Activated T-helper 2 cell treated with anti-CD3 and anti-CD28 coated beads, Interferon-gamma antibody, Interleukin-2, Interleukin-4, amounts not matched to agents 10 μg/mL and 5 μg/mL and 100 μg/mL, durations not matched to agents 14 hours and 24 hours and 36 hours (primary cell): ENCODE measurements at regions of chr20 and their contacts with region 1.

Region 1: DNA sequence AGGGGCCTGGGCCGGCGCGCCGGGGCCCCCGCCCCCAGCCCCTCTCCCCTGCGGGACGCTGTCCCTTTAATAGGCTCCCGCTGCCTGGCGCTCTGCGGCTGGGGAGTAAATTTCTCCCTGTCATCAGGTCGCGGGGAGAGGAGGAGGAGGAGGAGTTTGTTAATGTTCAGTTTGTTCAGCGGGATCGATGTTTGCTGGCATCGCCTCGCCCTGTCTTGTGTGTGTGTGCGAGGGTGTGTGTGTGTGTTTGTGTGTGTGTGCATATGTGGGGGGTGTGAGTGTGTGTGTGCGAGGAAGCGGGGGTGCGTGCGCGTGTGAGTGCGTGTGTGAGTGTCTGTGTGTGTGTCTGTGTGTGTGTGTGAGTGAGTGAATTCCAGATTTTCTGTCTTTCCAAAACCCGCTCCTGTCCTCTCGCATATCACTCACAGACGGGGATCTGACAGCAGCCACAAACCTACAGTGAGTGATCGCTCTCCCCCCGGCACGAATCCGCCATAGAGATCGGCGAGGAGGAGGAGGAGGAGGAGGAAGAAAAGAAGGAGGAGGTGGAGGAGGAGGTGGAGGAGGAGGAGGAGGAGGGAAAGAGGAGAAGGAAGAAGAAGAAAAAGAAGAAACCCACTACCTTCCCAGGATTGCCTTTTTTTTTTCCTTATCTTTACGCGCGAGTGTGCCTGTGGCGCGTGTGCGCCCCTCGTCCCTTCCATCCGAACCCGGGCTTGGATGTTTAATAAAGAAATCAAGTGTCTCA is at the start of gene TSHZ2:
- DNase-seq: peak; percentile 20
- H3K4me3 Mint-ChIP-seq: peak within 1 kb of the TSS; percentile 93
- H3K27ac Mint-ChIP-seq: peak within 1 kb of the TSS; percentile 94
- H3K4me1 Mint-ChIP-seq: peaks cover 37% of the 10 kb centered on the region
- H3K27me3 Mint-ChIP-seq: peaks cover 17% of the 10 kb centered on the region
- total RNA-seq, gene TSHZ2: 19.8 and 23.0 TPM in 2 replicates

Region 2: GRCh38 chr20:52305858-52306257 is 666.5 kb before region 1 on chr20:
- intact Hi-C with region 1: loop called (anchors 2 kb)
- DNase-seq: peak; percentile 27
- H3K4me3 Mint-ChIP-seq: no peak overlapping the region
- H3K27ac Mint-ChIP-seq: peak overlapping the region; percentile 65
- H3K4me1 Mint-ChIP-seq: peaks cover 41% of the 10 kb centered on the region
- H3K27me3 Mint-ChIP-seq: no peaks in the 10 kb centered on the region

Region 3: DNA sequence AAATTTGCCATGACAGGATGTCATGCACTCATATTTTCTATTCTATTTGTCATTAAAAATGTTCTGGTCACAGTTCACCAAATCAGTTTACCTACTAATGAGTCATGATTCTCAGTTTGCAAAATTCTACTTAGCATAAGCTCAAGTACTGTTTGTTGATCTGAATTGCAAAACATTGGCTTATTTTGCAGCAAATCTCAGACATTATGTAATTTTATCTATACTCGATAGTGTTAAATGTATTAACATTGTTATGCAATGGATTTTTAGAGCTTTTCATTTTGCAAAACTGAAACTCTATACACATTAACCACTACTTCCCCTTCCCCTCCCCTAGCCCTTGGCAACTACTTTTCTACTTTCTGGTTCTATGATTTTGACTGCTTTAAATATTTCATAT is 566.9 kb before region 1 on chr20:
- intact Hi-C with region 1: loop called (anchors 10 kb)
- DNase-seq: no peak
- H3K4me3 Mint-ChIP-seq: no peak overlapping the region
- H3K27ac Mint-ChIP-seq: peak overlapping the region; percentile 17
- H3K4me1 Mint-ChIP-seq: peaks cover 41% of the 10 kb centered on the region
- H3K27me3 Mint-ChIP-seq: no peaks in the 10 kb centered on the region

Region 4: DNA sequence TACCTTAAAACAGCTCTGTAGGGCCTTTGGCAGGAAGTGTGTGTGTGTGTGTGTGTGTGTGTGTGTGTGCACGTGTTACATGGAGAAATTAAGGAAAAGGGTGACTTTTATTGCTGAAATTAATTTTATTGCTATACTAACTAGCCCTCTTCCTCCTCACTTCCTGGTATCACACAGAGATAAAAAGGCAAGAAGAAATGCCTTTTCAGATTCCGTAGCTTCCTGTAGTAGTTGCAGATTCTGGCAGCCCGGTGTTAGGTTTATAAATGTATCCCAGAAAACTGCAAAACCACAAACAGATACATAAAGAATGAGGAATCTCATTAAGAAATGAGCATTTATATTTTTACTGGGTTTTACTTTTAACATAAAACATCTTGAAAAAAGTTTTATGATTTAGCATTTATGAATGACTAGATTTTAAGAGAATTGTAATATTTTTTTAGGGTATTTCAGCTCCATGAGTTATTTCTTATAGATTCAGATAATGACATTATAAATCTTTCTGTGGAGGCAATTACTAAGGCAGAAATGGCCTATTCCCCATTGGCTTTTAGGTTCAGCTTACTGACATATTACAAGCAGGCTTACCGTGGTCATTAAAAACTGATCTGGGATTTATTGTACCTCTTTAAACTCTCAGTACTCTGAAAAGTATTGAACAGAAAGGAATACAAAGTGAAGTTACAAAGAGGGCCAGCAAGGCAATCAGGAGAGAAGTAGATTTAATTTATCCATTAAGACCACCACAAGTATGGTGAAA is 249.3 kb before region 1 on chr20:
- intact Hi-C with region 1: no loop called
- DNase-seq: no peak
- H3K4me3 Mint-ChIP-seq: no peak overlapping the region
- H3K27ac Mint-ChIP-seq: no peak overlapping the region
- H3K4me1 Mint-ChIP-seq: no peaks in the 10 kb centered on the region
- H3K27me3 Mint-ChIP-seq: peaks cover 1% of the 10 kb centered on the region

Region 5: GRCh38 chr20:53001498-53002301 is 29.3 kb after region 1 on chr20:
- intact Hi-C with region 1: loop called (anchors 2 kb)
- DNase-seq: no peak
- H3K4me3 Mint-ChIP-seq: peak overlapping the region; percentile 74
- H3K27ac Mint-ChIP-seq: peak overlapping the region; percentile 92
- H3K4me1 Mint-ChIP-seq: peaks cover 33% of the 10 kb centered on the region
- H3K27me3 Mint-ChIP-seq: no peaks in the 10 kb centered on the region

Region 6: DNA sequence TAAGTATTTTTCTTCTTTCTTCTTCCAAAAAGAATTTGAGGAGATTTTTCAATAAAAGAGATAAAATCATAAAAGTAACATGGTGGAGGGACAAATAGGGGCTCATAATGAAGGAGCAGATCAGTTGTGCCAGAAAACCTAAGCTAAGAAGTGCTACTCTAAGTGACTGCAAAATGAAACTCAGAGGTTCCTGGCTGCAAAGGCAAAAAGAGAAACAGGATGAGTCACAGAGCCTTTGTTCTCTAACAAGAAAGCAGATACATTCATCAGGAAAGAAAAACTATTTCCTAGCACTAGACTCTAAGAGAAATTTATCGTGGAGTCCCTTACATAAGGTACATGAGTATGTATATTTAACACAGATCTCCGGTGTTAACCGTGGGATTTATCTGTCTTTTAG is 49.6 kb after region 1 on chr20:
- intact Hi-C with region 1: loop called (anchors 1 kb)
- DNase-seq: no peak
- H3K4me3 Mint-ChIP-seq: no peak overlapping the region
- H3K27ac Mint-ChIP-seq: peak overlapping the region; percentile 56
- H3K4me1 Mint-ChIP-seq: peaks cover 50% of the 10 kb centered on the region
- H3K27me3 Mint-ChIP-seq: no peaks in the 10 kb centered on the region